ENCODE measurements at regions of chr4 and their contacts with region 1.

Region 1: DNA sequence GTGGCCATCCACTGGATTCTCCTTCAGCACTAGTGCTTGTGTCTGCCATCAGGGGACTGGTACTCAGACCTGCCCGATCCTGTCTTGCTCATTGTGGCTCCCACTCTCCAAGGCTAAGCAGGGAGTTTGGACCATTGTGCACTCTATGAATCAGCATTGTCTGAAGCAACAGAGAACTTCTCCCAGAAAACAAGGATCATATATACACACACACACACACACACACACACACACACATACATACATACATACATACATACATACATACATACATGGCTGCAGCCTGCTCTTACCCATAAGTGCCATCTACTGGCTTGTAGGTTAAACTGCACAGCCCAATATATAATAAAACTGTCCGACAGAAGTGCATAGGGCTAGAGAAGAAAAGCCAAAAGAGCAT is 345.3 kb upstream of the LCORL start:
- DNase-seq: no peak
- H3K4me3 ChIP-seq: no peak overlapping the region
- CTCF ChIP-seq: no peak
- POLR2A ChIP-seq: no peak

Region 2: DNA sequence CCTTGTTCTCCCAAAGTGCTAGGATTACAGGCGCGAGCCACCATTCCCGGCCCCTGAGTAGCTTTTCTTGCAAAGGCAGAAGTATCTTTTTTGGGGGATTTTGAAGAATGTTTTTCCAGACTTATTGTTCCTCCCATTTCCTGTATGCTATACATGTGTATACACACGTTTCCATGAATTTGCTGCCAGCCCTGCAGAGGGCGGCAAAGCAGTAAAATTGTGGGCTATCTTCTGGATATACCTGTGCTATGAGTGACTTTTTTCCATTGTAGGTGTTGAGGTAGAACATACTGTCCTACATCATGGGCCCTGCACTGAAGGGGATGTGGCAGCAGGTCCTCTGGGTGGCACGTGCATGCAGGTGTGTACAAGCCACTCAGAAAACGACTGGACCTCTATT is 769.4 kb before region 1 on chr4:
- intact Hi-C with region 1: loop called (anchors 5 kb)
- DNase-seq: no peak
- H3K4me3 ChIP-seq: no peak overlapping the region
- CTCF ChIP-seq: no peak
- POLR2A ChIP-seq: no peak

Region 3: GRCh38 chr4:17810260-17811077 is 556.4 kb before region 1 on chr4 and contains the starts of genes DCAF16 and NCAPG:
- intact Hi-C with region 1: loop called (anchors 10 kb)
- DNase-seq: peak; percentile 99 to 100
- H3K4me3 ChIP-seq: peak within 1 kb of the TSS; percentile 89
- CTCF ChIP-seq: no peak
- POLR2A ChIP-seq: peak in 1 of 2 donors; percentile 95
- total RNA-seq, gene DCAF16: 28.3 to 36.1 (median 31.9) TPM
- total RNA-seq, gene NCAPG: 0.34 to 5.3 (median 1.8) TPM

Measured in lower leg skin (tissue), 4 donors.